Activated T-helper 2 cell treated with anti-CD3 and anti-CD28 coated beads, Interferon-gamma antibody, Interleukin-2, Interleukin-4, amounts not matched to agents 10 μg/mL and 5 μg/mL and 100 μg/mL, durations not matched to agents 14 hours and 24 hours and 36 hours (primary cell): ENCODE measurements at regions of chr1 and their contacts with region 1.

Region 1: GRCh38 chr1:16055613-16056520 is 12.3 kb downstream of the CLCNKB start:
- DNase-seq: peak; percentile 78
- H3K4me3 Mint-ChIP-seq: no peak overlapping the region
- H3K27ac Mint-ChIP-seq: no peak overlapping the region
- H3K4me1 Mint-ChIP-seq: peaks cover 3% of the 10 kb centered on the region
- H3K27me3 Mint-ChIP-seq: no peaks in the 10 kb centered on the region

Region 2: GRCh38 chr1:15656464-15656863 is 399.4 kb before region 1 on chr1:
- intact Hi-C with region 1: no loop called
- DNase-seq: no peak
- H3K4me3 Mint-ChIP-seq: no peak overlapping the region
- H3K27ac Mint-ChIP-seq: no peak overlapping the region
- H3K4me1 Mint-ChIP-seq: no peaks in the 10 kb centered on the region
- H3K27me3 Mint-ChIP-seq: no peaks in the 10 kb centered on the region

Region 3: GRCh38 chr1:15788624-15789301 is 267.1 kb before region 1 on chr1:
- intact Hi-C with region 1: loop called (anchors 1 kb)
- DNase-seq: no peak
- H3K4me3 Mint-ChIP-seq: no peak overlapping the region
- H3K27ac Mint-ChIP-seq: no peak overlapping the region
- H3K4me1 Mint-ChIP-seq: peaks cover 5% of the 10 kb centered on the region
- H3K27me3 Mint-ChIP-seq: peaks cover 4% of the 10 kb centered on the region

Region 4: DNA sequence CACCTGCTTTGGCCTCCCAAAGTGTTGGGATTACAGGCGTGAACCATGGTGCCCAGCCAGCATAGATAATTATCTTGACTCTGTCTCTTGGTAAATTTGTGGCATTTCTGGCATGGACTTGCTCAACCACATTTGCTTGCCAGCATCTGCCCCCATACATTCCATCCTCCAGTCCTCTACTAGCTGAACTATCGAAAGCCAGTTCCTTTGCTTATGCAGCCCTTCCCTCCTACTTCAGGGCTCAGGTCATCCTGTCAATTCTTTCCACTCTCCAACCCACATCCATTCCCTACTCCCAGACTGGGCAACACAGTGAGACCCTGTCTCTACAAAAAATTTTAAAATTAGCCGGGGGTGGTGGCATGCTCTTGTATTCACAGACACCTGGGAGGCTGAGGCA is 235.4 kb before region 1 on chr1:
- intact Hi-C with region 1: loop called (anchors 5 kb)
- DNase-seq: no peak
- H3K4me3 Mint-ChIP-seq: no peak overlapping the region
- H3K27ac Mint-ChIP-seq: no peak overlapping the region
- H3K4me1 Mint-ChIP-seq: peaks cover 6% of the 10 kb centered on the region
- H3K27me3 Mint-ChIP-seq: no peaks in the 10 kb centered on the region

Region 5: GRCh38 chr1:16009030-16009709 is 46.7 kb before region 1 on chr1:
- intact Hi-C with region 1: loop called (anchors 1 kb)
- DNase-seq: peak; percentile 50
- H3K4me3 Mint-ChIP-seq: no peak overlapping the region
- H3K27ac Mint-ChIP-seq: no peak overlapping the region
- H3K4me1 Mint-ChIP-seq: peaks cover 15% of the 10 kb centered on the region
- H3K27me3 Mint-ChIP-seq: no peaks in the 10 kb centered on the region

Region 6: DNA sequence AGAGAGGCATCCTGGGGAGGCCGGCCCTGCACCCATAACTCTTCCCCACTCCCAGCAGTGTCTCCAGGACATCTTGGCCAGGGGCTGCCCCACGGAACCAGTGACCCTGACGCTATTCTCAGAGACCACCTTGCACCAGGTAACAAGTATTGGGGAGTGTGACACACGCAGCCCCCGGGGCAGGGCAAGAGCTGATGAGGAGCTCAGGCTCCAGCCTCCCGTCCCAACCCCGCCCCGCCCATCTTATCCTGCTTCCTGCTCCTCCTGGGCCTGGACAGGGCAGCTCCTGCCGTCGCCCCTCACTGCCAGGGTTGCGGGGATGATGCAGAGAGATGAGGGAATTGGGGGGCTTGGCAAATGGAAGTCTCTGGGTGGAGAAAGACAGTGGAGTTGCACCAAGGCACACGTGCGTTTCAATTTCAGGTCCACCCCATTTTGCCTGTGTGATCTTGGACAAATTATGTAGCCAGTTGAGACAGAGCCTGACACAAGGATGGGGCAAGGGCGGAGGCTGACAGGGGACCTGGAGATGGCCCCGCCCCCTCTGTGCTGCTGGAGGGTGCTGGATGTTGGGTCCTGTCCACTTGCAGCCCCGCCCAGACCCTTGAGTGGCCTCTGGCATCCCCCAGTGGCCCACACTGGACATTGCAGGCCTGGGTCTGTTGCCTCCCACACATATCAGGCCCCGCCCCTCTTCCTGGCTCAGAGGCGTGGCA is 23.3 kb before region 1 on chr1:
- intact Hi-C with region 1: loop called (anchors 2 kb)
- DNase-seq: peak; percentile 35
- H3K4me3 Mint-ChIP-seq: no peak overlapping the region
- H3K27ac Mint-ChIP-seq: no peak overlapping the region
- H3K4me1 Mint-ChIP-seq: no peaks in the 10 kb centered on the region
- H3K27me3 Mint-ChIP-seq: peaks cover 7% of the 10 kb centered on the region